ENCODE measurements at regions of chr11 and their contacts with region 1.

Region 1: DNA sequence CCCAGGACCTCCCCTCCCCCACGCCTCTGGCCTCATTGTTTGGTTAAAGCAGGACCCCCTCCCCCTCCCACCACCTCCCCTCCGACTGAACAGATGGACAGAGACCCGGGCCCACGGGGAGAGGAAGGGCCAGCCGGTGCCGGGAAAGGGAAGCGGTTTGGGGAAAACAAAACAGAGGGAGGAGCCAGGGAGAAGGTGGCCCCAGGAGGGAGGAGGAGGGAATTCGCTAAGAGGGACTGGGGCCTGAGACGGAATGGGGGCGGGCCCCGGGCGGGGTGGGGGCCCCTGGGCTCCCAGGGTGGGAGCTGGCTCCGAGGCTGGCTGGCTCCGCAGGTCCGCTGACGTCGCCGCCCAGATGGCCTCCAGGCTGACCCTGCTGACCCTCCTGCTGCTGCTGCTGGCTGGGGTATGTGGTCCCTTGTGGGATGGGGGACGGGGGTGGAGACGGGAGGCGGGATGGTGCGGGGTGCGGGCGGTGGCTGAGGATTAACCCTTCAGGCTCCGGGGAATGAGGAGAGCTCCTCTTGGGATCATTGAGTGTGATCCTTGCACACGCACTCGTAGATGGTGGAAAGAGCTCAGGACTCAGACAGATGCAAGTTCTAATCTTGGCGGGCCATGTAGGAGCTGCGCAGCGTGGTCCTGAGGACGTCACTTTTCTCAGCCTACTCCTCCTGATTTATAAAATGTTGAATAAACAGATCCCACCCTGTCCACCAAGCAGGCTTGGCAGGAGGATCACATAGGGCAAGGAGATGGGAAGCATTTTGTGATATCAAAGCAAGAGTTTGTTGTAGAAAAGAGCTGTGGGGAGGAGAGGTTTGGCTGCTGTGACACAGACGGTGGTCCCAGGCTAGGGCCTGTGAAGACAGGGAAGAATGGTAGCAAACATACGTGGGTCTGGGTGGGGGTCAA is 688 bp downstream of the SERPING1 start:
- DNase-seq: peak; percentile 89 to 91
- ATAC-seq: peak; percentile 96
- H3K4me3 ChIP-seq: peak overlapping the region; percentile 55 to 83
- H3K27ac ChIP-seq: peak overlapping the region; percentile 49 to 99
- H3K4me1 ChIP-seq: peaks cover 0 to 4% of the 10 kb centered on the region in 2 donors
- H3K27me3 ChIP-seq: no peaks in the 10 kb centered on the region

Region 2: GRCh38 chr11:57567515-57568329 is 30.5 kb before region 1 on chr11 and contains the start of gene UBE2L6:
- intact Hi-C with region 1: loop called in 1 of 2 experiments (anchors 2 kb)
- DNase-seq: peak; percentile 89 to 97
- ATAC-seq: peak; percentile 86
- H3K4me3 ChIP-seq: peak within 1 kb of the TSS; percentile 79 to 85
- H3K27ac ChIP-seq: peak within 1 kb of the TSS in 1 of 2 donors; percentile 74
- H3K4me1 ChIP-seq: no peaks in the 10 kb centered on the region
- H3K27me3 ChIP-seq: no peaks in the 10 kb centered on the region
- total RNA-seq, gene UBE2L6: 42.0 to 68.9 TPM

Region 3: DNA sequence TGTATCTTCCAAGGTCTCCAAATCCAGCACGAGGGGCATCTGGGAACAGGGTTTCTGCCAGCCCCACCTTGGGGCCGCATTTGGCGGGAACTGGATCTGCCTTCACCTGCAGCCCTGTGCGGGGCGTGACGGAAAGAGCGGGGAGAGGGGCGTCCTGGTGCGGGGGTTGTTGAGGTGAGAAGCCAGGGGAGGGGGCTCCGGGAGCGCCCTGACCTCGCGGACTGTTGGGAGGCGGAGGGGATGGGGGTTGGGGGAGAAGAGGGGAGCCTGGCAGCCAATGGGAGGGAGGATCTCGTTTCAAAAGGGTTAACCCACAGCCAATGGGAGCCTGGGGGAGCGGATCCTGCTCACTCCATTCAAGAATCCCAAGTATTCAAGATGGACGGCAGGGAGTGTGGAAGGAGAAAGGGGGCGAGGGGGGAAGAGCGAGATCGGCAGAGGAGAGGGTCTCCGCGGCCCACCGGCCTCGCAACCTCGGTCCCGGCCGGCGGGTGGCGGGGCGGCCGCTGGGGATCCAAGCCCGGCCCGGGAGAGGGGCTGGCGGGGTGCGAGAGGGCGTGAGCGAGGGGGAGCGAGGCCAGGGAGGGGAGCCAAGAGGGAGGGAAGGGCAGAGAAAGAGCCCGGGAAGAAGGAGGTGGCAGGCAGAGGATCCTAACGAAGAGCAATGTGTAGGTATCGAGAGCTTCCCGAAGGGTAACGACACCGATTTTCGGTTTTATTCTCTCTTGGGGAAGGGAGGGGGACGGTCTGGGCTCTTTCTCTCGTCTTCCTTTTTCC is 40.0 kb after region 1 on chr11:
- intact Hi-C with region 1: loop called (anchors 5 kb)
- DNase-seq: peak; percentile 79 to 91
- ATAC-seq: peak; percentile 79
- H3K4me3 ChIP-seq: peak overlapping the region; percentile 98 to 99
- H3K27ac ChIP-seq: peak overlapping the region in 1 of 2 donors; percentile 42
- H3K4me1 ChIP-seq: peaks cover 0 to 5% of the 10 kb centered on the region in 2 donors
- H3K27me3 ChIP-seq: no peaks in the 10 kb centered on the region

Region 4: DNA sequence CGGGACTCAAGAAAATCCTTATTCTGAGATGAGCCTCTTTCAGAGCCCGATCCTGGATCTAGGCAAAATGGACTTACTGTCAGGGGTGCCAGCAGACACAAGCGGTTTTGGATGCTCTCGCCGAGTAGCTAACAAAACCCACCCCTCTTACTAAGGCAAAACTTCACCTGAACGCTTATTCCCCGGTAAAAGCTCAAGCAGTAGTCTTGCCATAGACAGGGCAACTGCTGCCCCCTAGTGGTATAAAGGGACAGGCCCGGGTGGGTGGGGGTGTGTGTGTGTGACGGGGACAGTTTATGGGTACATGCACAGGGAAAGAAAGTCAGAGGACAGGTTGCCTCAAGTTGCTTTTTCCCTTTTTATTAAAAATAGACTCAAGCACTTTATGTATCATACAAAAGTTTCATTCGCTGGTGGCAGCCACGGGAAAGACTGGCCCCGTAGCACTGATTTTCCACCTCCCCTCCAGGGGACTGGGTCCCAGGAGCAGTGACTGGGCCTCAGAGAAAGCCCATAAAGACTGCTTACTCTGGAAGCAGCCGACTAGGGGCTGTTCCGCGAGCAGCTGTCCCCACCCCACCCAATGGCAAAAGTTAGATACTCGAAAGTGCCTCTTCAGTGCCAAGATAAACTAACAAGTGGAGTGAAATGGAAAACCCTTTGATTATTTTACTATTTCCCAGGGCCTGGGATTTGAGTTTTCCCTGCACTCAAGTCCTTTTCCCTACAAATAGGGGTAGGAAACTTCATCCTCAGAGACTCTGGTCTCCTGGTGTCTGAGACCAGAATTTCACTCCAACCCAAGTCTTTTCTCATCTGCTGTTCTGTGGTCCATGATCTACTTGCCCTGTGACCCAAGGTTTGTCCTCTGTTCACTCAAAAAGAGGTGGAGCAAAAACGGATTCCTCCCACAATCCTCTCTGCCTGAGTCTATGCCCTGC is 46.8 kb after region 1 on chr11:
- intact Hi-C with region 1: loop called in 1 of 2 experiments (anchors 5 kb)
- DNase-seq: peak; percentile 84 to 90
- ATAC-seq: peak; percentile 82
- H3K4me3 ChIP-seq: no peak overlapping the region
- H3K27ac ChIP-seq: no peak overlapping the region
- H3K4me1 ChIP-seq: no peaks in the 10 kb centered on the region
- H3K27me3 ChIP-seq: no peaks in the 10 kb centered on the region

Region 5: DNA sequence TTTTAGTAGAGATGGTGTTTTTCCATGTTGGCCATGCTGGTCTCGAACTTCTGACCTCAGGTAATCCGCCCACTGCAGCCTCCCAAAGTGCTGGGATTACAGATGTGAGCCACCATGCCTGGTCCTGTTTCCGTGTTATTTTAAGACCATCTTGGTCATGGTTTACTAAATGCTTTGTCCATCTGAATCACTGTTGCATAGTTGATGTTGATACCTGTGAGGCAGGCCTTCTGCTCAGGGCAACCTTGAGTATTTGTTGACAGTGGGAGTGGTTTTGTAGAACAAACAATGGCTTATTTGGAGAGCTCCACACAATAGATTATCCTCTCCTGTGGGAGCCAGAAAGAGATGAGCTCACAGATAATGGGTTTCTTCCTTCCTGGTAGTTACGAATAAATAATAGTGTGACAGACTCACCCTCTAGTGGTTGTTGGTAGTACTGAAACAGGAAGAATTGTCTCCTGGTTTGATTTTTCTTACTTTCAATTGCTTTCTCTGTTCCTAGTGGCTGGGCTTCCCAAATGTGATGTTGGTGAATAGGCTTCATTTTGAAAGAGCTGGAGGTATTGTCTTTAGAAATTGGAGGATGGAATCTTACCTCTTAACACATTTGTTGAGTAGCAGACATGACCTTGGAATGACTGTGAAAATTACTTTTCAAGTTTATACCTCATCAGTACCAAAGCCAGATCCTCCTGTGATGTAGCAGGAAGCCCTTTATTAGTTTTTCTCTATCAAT is 202.4 kb after region 1 on chr11:
- intact Hi-C with region 1: no loop called
- DNase-seq: no peak
- ATAC-seq: peak; percentile 86
- H3K4me3 ChIP-seq: no peak overlapping the region
- H3K27ac ChIP-seq: peak overlapping the region in 1 of 2 donors; percentile 8
- H3K4me1 ChIP-seq: no peaks in the 10 kb centered on the region
- H3K27me3 ChIP-seq: no peaks in the 10 kb centered on the region